Heart left ventricle (tissue), 16 donors: ENCODE measurements at regions of chr2 and their contacts with region 1.

Region 1: DNA sequence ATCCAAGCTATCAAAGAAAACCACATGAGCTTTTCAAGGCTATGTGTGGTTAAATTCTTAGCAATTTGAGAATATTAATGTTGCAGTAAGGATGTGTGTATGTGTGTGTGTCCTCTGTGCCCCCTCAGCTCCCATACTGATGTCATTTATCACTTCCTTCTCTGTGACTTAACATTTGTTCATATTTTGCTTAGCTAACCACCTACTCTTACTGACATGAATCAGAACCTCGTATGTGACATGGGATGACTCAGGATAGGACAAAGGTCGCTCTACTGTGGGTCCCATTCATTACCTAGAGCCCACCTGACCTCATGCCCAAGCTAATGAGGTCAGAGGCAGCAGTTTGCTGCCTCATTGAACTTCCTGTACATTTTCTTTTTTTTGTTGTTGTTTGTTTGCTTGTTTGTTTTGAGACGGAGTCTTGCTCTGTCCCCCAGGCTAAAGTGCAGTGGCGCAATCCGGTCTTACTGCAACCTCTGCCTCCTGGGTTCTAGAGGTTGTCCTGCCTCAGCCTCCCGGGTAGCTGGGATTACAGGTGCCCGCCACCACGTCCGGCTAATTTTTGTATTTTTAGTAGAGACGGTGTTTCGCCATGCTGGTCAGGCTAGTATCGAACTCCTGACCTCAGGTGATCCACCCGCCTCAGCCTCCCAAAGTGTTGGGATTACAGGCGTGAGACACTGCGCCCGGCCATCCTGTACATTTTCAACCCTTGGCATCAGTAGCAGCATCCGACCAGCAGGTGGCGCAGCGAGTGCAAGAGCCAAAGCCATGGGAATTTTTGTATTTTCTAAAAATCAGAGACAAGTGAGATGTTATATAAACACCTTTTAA is 36.4 kb downstream of the MOGAT1 start:
- DNase-seq: peak; percentile 74 to 89 (median 81)
- ATAC-seq: peak in 3 of 4 donors; percentile 56 to 65 (median 61)
- H3K4me3 ChIP-seq: no peak overlapping the region
- H3K27ac ChIP-seq: no peak overlapping the region
- H3K4me1 ChIP-seq: peaks cover 0 to 23% (median 11%) of the 10 kb centered on the region in 12 donors
- H3K27me3 ChIP-seq: no peaks in the 10 kb centered on the region
- CTCF ChIP-seq: peak; percentile 96 to 98 (median 97)
- POLR2A ChIP-seq: no peak

Region 2: DNA sequence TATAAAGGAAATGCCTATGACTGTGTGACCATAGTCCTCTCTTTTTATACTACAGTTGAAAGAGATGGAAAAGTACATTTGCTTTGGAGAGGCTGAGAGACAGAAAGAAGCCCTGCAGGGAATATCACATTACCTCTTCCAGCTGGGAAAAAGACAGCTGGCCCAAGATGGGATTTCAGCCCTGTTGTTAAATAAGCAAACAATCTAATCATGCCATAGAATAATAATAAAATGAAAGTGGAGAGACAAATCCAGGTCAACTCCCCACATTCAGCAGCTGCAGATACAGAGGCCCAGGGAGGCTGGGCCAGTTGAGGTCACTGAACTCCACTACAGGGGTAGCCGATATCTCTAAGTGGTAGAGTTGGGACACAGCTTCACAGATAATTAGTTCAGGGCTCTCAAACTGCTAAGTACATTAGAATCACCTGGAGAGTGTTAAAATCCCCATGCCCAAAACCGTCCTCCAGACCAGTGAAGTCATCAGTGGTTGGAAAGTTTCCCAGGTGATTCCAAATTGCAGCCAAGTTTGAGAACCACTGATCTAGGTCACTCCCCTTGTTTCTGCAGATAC is 45.4 kb after region 1 on chr2:
- intact Hi-C with region 1: loop called in 3 of 10 experiments (anchors 5 kb)
- DNase-seq: peak in 4 of 5 donors; percentile 46 to 72 (median 53)
- ATAC-seq: peak; percentile 95 to 97 (median 96)
- H3K4me3 ChIP-seq: no peak overlapping the region
- H3K27ac ChIP-seq: peak overlapping the region in 11 of 12 donors; percentile 5 to 66 (median 38)
- H3K4me1 ChIP-seq: peaks cover 0 to 30% (median 19%) of the 10 kb centered on the region in 12 donors
- H3K27me3 ChIP-seq: no peaks in the 10 kb centered on the region
- CTCF ChIP-seq: no peak
- POLR2A ChIP-seq: no peak

Region 3: DNA sequence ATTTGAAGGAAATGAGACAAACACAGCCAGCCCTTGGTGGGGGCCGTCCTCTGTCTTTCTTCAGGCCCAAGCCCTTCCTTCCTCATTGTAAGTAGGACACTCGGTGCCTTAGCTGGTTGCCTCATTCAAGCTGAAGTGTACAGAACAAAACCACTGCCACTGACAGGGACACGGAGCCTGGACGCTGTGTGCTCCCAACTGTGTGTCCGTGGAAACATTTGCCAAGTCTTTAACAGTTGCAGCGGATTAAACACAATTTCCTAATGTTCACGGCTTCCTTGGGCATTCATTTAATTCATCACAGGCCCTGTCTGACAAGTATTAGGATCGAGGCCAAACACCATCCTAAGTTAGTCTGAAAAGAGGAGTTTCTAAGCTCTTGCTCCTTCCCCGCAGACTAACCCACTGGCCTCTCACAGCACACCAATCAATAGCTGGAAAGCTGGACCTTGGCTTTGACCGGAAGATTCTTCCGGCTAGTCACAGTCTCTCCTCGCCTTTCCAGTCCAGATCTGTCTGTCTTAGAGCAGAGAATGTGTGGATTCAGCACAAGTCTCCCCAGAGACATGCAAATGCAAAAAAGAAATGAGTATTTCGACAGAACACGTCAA is 84.2 kb after region 1 on chr2:
- intact Hi-C with region 1: loop called in 7 of 10 experiments (anchors 1 to 10 kb)
- DNase-seq: peak; percentile 50 to 79 (median 70)
- ATAC-seq: peak; percentile 91 to 95 (median 92)
- H3K4me3 ChIP-seq: peak overlapping the region in 2 of 12 donors; percentile 2 to 11
- H3K27ac ChIP-seq: peak overlapping the region; percentile 50 to 91 (median 75)
- H3K4me1 ChIP-seq: peaks cover 0 to 57% (median 40%) of the 10 kb centered on the region in 12 donors
- H3K27me3 ChIP-seq: no peaks in the 10 kb centered on the region
- CTCF ChIP-seq: no peak
- POLR2A ChIP-seq: peak in 1 of 2 donors; percentile 27

Region 4: GRCh38 chr2:222797261-222797660 is 89.4 kb after region 1 on chr2:
- intact Hi-C with region 1: loop called in 7 of 10 experiments (anchors 1 to 10 kb)
- DNase-seq: no peak
- ATAC-seq: peak in 1 of 4 donors; percentile 42
- H3K4me3 ChIP-seq: no peak overlapping the region
- H3K27ac ChIP-seq: peak overlapping the region in 5 of 12 donors; percentile 19 to 61 (median 30)
- H3K4me1 ChIP-seq: peaks cover 0 to 37% (median 23%) of the 10 kb centered on the region in 12 donors
- H3K27me3 ChIP-seq: no peaks in the 10 kb centered on the region
- CTCF ChIP-seq: peak in 10 of 12 donors; percentile 28 to 55 (median 46)
- POLR2A ChIP-seq: no peak

Region 5: GRCh38 chr2:222805541-222806304 is 97.8 kb after region 1 on chr2:
- intact Hi-C with region 1: loop called in 1 of 10 experiments (anchors 10 kb)
- DNase-seq: peak in 2 of 5 donors; percentile 34 to 38
- ATAC-seq: peak; percentile 94 to 98 (median 95)
- H3K4me3 ChIP-seq: no peak overlapping the region
- H3K27ac ChIP-seq: peak overlapping the region in 3 of 12 donors; percentile 2 to 76 (median 8)
- H3K4me1 ChIP-seq: peaks cover 0 to 20% (median 0%) of the 10 kb centered on the region in 12 donors
- H3K27me3 ChIP-seq: no peaks in the 10 kb centered on the region
- CTCF ChIP-seq: no peak
- POLR2A ChIP-seq: no peak

Region 6: GRCh38 chr2:222903234-222904220 is 195.6 kb after region 1 on chr2:
- intact Hi-C with region 1: loop called in 9 of 10 experiments (anchors 1 to 5 kb)
- DNase-seq: no peak
- ATAC-seq: peak; percentile 38 to 67 (median 58)
- H3K4me3 ChIP-seq: no peak overlapping the region
- H3K27ac ChIP-seq: no peak overlapping the region
- H3K4me1 ChIP-seq: peaks cover 0 to 77% (median 19%) of the 10 kb centered on the region in 12 donors
- H3K27me3 ChIP-seq: no peaks in the 10 kb centered on the region
- CTCF ChIP-seq: peak; percentile 56 to 82 (median 72)
- POLR2A ChIP-seq: no peak

Region 7: GRCh38 chr2:222912117-222912516 is 204.2 kb after region 1 on chr2:
- intact Hi-C with region 1: loop called in 1 of 10 experiments (anchors 5 kb)
- DNase-seq: no peak
- ATAC-seq: peak in 3 of 4 donors; percentile 44 to 85 (median 53)
- H3K4me3 ChIP-seq: no peak overlapping the region
- H3K27ac ChIP-seq: peak overlapping the region in 2 of 12 donors; percentile 51 to 68
- H3K4me1 ChIP-seq: peaks cover 0 to 40% (median 17%) of the 10 kb centered on the region in 12 donors
- H3K27me3 ChIP-seq: no peaks in the 10 kb centered on the region
- CTCF ChIP-seq: no peak
- POLR2A ChIP-seq: no peak